ENCODE measurements at regions of chr15 and their contacts with region 1.

Region 1: DNA sequence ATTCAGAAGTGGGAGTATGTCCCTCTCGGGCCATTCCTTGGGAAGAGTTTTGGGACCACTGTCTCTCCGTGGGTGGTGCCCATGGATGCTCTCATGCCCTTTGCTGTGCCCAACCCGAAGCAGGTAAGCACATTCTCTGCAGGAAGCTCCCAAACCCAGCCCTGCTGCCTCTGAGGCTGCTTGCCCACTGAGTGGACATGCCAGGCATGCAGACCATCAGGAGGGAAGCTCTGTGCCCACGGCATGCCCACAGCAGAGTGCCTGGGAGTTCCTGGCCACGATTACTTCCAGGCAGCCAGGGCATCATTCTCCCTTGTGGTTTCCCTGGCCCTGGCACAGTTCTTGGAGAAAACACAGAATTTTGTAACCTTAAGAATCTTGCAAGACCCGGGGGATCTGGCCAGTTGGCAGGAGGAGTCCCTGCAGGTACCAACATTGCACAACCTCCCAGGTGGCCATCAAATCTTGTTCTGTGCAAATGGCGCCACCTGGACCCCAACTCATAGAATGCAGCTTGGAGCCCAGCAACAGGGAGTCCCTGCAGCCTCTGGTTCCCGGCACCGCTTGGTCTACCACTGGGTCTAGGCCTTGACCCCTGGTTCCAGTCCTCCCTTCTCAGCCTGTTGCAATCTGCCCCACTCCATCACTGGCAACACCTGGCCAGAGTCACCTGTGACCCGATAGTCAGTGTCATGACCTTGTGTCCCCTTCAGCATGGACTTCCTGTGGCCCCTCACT is 20.4 kb downstream of the FAH start:
- DNase-seq: peak; percentile 75 to 81
- H3K4me3 ChIP-seq: no peak overlapping the region
- H3K4me3 Mint-ChIP-seq: no peak overlapping the region
- H3K27ac Mint-ChIP-seq: no peak overlapping the region
- H3K4me1 ChIP-seq: no peaks in the 10 kb centered on the region
- H3K4me1 Mint-ChIP-seq: no peaks in the 10 kb centered on the region
- H3K27me3 ChIP-seq: no peaks in the 10 kb centered on the region
- H3K27me3 Mint-ChIP-seq: no peaks in the 10 kb centered on the region
- CTCF ChIP-seq: peak; percentile 78 to 92

Region 2: DNA sequence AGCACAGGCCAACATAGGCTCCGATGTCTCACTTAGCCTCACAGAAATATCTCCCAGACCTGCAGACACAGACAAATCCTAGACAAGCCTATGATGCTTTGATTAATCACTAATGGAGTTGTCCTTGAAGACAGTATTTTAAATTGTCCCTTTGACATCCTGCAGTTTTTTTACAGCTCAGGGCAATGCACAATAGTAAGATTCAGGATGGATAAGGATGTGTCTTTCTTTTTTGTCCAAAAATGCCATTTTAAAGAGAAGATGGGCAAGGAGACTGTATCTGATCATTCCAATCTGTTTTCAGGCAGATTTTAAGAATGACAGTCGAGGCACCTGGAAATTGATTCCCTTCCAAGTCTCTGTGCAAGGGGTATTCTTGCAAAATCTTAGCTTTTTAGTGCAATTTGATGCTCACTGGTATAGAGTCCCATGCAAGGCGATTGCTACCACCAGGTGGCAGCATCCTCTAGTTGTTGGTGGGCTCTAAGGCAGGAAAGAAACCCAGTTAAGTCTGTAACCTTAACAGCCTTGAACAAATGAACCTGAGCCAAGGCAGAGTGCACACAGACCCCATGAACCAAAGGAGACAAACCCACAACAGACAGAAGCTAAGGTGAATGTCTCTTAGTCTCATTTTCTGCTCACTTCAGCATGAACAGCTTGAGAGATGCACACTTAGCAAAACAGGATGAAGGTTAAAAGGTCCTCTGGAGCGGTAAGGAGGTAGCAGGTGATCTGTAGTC is 792.3 kb before region 1 on chr15:
- CTCF ChIA-PET with region 1: no interaction called
- POLR2A ChIA-PET with region 1: no interaction called
- intact Hi-C with region 1: loop called (anchors 5 kb)
- DNase-seq: peak; percentile 68 to 78
- H3K4me3 ChIP-seq: no peak overlapping the region
- H3K4me3 Mint-ChIP-seq: no peak overlapping the region
- H3K27ac Mint-ChIP-seq: no peak overlapping the region
- H3K4me1 ChIP-seq: no peaks in the 10 kb centered on the region
- H3K4me1 Mint-ChIP-seq: no peaks in the 10 kb centered on the region
- H3K27me3 ChIP-seq: no peaks in the 10 kb centered on the region
- H3K27me3 Mint-ChIP-seq: no peaks in the 10 kb centered on the region
- CTCF ChIP-seq: peak; percentile 65 to 76

Region 3: GRCh38 chr15:79896637-79897379 is 276.4 kb before region 1 on chr15 and contains the start of gene MTHFS:
- CTCF ChIA-PET with region 1: no interaction called
- POLR2A ChIA-PET with region 1: no interaction called
- intact Hi-C with region 1: loop called (anchors 5 kb)
- DNase-seq: peak; percentile 85 to 89
- H3K4me3 ChIP-seq: peak within 1 kb of the TSS; percentile 87
- H3K4me3 Mint-ChIP-seq: peak within 1 kb of the TSS; percentile 85
- H3K27ac Mint-ChIP-seq: peak within 1 kb of the TSS; percentile 94
- H3K4me1 ChIP-seq: no peaks in the 10 kb centered on the region
- H3K4me1 Mint-ChIP-seq: peaks cover 12% of the 10 kb centered on the region
- H3K27me3 ChIP-seq: no peaks in the 10 kb centered on the region
- H3K27me3 Mint-ChIP-seq: no peaks in the 10 kb centered on the region
- CTCF ChIP-seq: peak in 1 of 2 experiments; percentile 59
- total RNA-seq, gene MTHFS: 45.1 and 48.2 TPM in 2 replicates